A673 (cell line): ENCODE measurements at regions of chr5 and their contacts with region 1.

Region 1: GRCh38 chr5:115309751-115310370 is 13.4 kb upstream of the CCDC112 start:
- DNase-seq: peak; percentile 52
- H3K4me3 ChIP-seq: no peak overlapping the region
- H3K27ac ChIP-seq: no peak overlapping the region
- H3K4me1 ChIP-seq: no peaks in the 10 kb centered on the region
- H3K27me3 ChIP-seq: peaks cover 7% of the 10 kb centered on the region
- CTCF ChIP-seq: peak; percentile 70

Region 2: DNA sequence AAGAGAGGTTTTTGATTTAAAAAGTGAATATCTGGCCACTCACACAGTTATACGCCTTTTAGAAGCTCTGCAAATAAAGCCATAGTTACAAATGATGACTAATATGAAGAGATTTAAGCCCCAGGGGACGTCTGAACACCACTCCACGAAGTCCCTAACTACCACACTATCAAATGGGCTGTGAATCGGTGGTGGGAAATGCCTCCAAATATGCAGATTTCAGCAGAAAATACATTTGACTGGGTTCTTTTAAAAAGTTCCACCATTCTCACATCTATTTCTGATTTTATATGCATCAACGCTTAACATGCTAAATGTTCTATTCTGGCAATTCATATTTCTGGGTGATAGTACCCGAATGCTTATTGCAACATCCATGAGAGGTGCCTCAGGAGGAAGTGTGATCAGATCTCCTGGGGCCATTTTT is 269.9 kb after region 1 on chr5:
- CTCF ChIA-PET with region 1: interaction called, 35 read pairs
- POLR2A ChIA-PET with region 1: no interaction called
- intact Hi-C with region 1: loop called (anchors 1 kb)
- DNase-seq: peak; percentile 64
- H3K4me3 ChIP-seq: no peak overlapping the region
- H3K27ac ChIP-seq: no peak overlapping the region
- H3K4me1 ChIP-seq: peaks cover 4% of the 10 kb centered on the region
- H3K27me3 ChIP-seq: no peaks in the 10 kb centered on the region
- CTCF ChIP-seq: no peak

Region 3: DNA sequence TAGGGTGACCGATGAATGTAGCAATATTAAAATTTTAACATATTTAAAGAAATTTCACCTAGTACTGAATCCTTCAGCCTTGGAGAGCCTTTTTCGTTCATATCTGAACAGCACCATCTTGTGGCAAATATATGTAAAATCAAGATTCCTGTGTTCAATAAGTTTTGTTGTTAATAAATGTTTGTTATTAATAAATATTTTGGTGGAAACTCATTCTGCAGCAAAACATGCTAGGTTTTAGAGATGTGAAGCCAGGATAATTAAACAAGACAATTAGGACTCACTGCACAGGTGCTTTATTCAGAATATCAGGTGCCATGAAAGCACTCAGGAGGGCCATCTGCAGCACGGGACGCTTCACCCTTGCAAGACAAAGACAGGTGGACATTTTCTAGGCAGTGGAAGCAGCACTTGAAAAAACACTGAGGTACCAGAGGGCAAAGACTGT is 276.8 kb after region 1 on chr5:
- CTCF ChIA-PET with region 1: no interaction called
- POLR2A ChIA-PET with region 1: no interaction called
- intact Hi-C with region 1: loop called (anchors 2 kb)
- DNase-seq: peak; percentile 50
- H3K4me3 ChIP-seq: no peak overlapping the region
- H3K27ac ChIP-seq: no peak overlapping the region
- H3K4me1 ChIP-seq: no peaks in the 10 kb centered on the region
- H3K27me3 ChIP-seq: no peaks in the 10 kb centered on the region
- CTCF ChIP-seq: peak; percentile 68

Region 4: DNA sequence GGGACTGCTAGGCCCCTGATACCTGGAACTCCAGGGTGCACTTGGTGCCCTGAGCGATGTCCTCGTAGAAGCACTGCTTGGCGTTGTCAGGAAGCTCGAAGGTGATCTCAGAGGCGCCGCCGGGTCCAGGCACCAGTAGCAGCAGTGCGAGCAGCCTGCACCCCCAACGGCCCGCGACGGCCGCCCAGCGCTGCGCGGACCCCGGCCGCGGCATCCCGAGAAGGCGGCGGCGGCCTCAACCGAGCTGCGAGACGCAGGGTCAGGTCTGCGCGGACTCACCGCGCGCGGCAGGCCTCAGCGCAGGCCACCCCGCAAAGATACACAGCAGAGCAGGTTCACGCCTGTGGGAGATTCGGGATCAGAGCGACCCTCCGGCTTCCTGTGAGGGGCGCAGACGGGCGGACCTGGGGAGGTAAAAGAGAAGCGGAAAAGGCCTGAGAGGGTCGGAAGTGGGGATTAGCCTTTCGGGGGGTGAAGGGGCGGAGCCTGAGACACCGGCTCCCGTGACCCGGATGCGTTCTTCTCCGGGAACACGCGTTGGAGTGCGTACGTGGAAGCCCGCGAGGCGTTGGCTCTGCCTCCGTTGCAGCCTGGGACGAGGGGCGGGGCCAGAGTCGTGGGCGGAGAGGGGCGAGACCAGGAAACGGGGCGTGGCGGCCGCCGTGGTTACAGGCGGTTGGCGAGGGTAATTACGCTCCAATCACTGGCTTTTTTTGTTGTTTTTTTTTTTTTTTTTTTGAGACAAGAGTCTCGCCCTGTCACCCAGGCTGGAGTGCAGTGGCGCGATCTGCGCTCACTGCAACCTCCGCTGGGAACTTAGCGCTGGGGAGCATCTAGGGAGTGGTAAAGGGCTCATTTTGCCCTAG is 316.0 kb after region 1 on chr5 and contains the start of gene TMED7:
- CTCF ChIA-PET with region 1: no interaction called
- POLR2A ChIA-PET with region 1: no interaction called
- intact Hi-C with region 1: no loop called
- DNase-seq: peak; percentile 99
- H3K4me3 ChIP-seq: peak within 1 kb of the TSS; percentile 90
- H3K27ac ChIP-seq: peak within 1 kb of the TSS; percentile 94
- H3K4me1 ChIP-seq: peaks cover 24% of the 10 kb centered on the region
- H3K27me3 ChIP-seq: no peaks in the 10 kb centered on the region
- CTCF ChIP-seq: no peak
- total RNA-seq, gene TMED7: 62.8 and 65.1 TPM in 2 replicates

Region 5: DNA sequence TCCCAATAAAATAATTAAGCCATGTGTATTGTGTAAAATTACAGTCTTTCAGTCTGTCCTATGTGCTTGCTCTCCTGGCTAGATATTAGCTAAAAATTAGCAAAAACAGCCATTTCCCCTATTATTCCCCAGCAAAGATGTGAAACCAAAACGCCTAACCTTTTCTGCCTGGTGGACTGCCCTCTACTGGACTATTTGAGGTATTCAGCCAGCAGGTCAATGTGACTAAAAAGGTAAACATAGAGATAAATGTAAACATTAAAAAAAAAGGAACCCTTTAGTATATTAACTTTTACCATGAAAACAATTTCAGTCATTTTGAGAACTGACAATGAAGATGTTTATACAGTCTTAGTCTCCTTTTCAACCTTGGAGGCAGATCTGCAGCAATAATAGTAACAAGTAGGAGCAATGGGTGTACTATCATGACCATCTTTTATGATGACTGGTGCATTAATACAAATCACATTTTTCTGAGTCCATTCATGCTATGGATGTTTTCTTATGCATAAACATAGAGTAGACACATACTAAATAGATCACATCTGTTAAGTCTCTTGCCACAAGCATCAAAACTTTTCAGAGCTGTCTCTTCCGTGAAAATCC is 521.4 kb after region 1 on chr5:
- CTCF ChIA-PET with region 1: no interaction called
- POLR2A ChIA-PET with region 1: no interaction called
- intact Hi-C with region 1: loop called (anchors 10 kb)
- DNase-seq: peak; percentile 54
- H3K4me3 ChIP-seq: no peak overlapping the region
- H3K27ac ChIP-seq: no peak overlapping the region
- H3K4me1 ChIP-seq: no peaks in the 10 kb centered on the region
- H3K27me3 ChIP-seq: no peaks in the 10 kb centered on the region
- CTCF ChIP-seq: peak; percentile 78

Region 6: DNA sequence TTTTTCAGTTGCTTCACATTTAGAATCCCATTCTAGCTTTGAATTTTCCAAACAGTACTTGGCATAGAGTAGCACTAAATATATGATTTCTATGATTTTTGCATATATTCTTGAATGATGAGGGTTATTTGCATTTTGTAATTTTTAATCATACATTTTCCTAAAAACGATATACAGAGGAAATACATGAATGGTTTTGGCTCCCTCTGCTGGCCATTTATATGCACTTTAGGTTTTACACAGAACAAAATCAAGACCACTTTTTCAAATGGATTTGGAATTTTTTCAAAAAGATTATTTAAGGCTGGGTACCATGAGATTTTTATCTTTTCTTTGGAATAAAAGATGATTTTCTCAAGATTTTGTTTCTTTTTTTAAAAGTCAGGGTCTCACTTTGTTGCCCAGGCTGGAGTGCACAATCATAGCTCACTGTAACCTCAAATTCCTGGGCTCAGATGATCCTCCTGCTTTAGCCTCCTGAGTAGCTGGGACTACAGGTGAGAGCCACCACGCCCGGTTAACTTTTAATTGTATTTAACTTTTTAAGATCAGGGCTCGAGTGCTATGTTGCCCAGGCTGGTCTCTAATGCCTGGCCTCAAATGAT is 758.3 kb after region 1 on chr5:
- CTCF ChIA-PET with region 1: no interaction called
- POLR2A ChIA-PET with region 1: no interaction called
- intact Hi-C with region 1: loop called (anchors 2 kb)
- DNase-seq: peak; percentile 55
- H3K4me3 ChIP-seq: no peak overlapping the region
- H3K27ac ChIP-seq: no peak overlapping the region
- H3K4me1 ChIP-seq: no peaks in the 10 kb centered on the region
- H3K27me3 ChIP-seq: peaks cover 5% of the 10 kb centered on the region
- CTCF ChIP-seq: peak; percentile 84